GM10248 (cell line): ENCODE measurements at regions of chr14 and their contacts with region 1.

Region 1: DNA sequence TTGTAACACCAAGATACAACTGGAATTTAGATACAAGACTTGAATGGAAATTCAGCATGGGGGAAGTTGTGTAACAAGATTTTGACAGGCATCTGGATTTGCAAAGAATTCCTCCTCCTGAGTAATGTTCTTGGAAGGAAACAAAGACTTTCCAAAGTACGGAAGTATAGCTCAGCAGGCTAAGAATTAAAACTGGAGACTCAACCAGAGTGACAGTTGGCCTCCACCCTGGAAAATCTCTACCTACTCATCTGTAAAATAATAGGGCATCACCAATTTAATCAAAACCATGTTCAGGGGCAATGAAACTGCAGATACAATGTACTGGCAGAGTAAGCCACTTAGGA is 14.8 kb downstream of the DCAF5 start:
- DNase-seq: no peak
- CTCF ChIP-seq: no peak

Region 2: GRCh38 chr14:69151315-69152049 is 13.3 kb after region 1 on chr14:
- CTCF ChIA-PET with region 1: interaction called, 20 read pairs
- POLR2A ChIA-PET with region 1: no interaction called
- DNase-seq: peak; percentile 90
- CTCF ChIP-seq: peak; percentile 64